CD8-positive, alpha-beta memory T cell (primary cell): ENCODE measurements at regions of chr9 and their contacts with region 1.

Region 1: GRCh38 chr9:129289131-129289731 is 111.2 kb upstream of the IER5L start:
- DNase-seq: no peak
- H3K4me3 ChIP-seq: no peak overlapping the region
- H3K4me3 Mint-ChIP-seq: no peak overlapping the region
- H3K27ac ChIP-seq: no peak overlapping the region
- H3K27ac Mint-ChIP-seq: peak overlapping the region in 2 of 8 donors; percentile 46 to 79
- H3K4me1 ChIP-seq: no peaks in the 10 kb centered on the region
- H3K4me1 Mint-ChIP-seq: no peaks in the 10 kb centered on the region
- H3K27me3 ChIP-seq: no peaks in the 10 kb centered on the region
- H3K27me3 Mint-ChIP-seq: peaks cover 0 to 4% of the 10 kb centered on the region in 2 donors

Region 2: DNA sequence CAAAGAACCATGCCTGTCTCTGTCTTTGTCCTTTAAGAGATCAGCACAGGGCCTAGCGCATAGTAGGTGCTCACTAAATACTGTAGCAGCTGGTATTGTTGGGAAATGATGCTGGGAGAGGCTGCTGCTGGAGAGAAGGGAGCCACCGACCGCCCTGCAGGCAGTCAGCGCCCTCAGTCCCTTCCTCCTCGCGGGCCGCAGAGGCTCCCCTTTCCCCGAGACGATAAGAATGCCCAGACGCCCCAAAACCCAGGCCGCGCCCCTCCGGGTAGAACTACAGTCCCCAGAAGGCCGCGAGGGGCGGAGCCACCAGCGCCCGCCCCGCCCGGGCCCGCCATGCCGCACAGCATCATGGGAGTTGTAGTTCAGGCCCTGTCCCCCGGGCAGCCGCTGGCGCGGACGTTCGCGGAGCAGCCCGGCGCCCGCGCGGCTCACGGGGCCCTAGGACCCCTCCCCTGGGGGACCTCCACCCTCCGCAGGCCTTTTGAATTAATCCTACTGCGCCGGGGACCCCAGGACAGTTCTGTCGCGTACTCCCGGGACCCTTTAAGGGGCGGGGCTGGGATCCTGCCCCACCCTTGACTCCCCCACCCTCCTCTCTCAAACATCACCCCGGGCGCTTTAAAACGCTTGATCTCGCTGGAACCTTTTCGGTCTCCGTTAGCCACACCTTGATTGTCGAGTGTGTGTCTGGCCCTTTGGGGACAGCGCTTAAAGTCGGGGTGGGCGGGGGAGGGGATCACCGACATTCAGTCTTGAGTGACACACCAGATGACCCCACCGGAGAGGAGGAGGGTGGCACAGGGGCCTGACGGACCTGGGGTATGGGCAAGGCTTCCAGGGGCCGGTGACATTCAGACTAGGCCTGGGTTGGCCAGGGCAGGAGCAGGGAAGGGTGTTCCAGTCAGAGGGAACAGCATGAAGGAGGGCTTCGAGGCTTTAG is 86.3 kb before region 1 on chr9:
- CTCF ChIA-PET with region 1: no interaction called
- POLR2A ChIA-PET with region 1: no interaction called
- DNase-seq: peak; percentile 85 to 91 (median 88)
- H3K4me3 ChIP-seq: peak overlapping the region; percentile 76
- H3K4me3 Mint-ChIP-seq: peak overlapping the region in 6 of 7 donors; percentile 68 to 94 (median 77)
- H3K27ac ChIP-seq: peak overlapping the region; percentile 70
- H3K27ac Mint-ChIP-seq: peak overlapping the region; percentile 39 to 96 (median 64)
- H3K4me1 ChIP-seq: peaks cover 25% of the 10 kb centered on the region
- H3K4me1 Mint-ChIP-seq: peaks cover 14 to 22% (median 16%) of the 10 kb centered on the region in 3 donors
- H3K27me3 ChIP-seq: no peaks in the 10 kb centered on the region
- H3K27me3 Mint-ChIP-seq: peaks cover 1 to 13% of the 10 kb centered on the region in 2 donors

Region 3: DNA sequence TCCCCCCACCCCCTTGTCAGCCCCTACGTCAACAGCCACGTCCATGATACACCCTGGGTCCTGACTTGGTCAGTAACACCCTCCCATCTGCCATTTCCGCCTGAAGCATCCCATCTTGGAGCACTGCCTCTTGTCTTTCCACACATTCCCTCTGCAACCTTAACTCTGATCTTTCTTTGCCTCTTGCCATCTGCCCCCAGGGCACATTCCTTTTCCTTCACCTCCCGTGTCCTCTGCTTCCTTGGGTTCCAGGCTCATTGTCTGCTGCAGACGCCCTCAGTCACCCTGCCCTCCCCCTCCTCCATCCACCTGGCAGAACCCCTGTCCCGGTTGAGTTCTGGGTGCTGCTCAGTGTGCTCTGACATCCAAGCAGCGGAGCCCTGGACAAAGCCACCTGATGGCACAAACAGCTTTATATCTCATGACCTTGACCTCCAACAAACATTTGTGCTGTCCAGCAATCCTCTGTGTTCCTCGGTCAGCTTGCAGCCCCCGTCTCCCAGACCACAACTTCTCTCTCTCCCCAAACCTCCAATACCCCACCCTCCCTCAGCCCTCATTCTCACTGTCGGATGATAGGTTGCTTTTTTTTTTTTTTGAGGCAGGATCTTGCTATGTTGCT is 13.5 kb before region 1 on chr9:
- CTCF ChIA-PET with region 1: no interaction called
- POLR2A ChIA-PET with region 1: interaction called, 15 read pairs
- DNase-seq: peak in 1 of 5 donors; percentile 23
- H3K4me3 ChIP-seq: no peak overlapping the region
- H3K4me3 Mint-ChIP-seq: no peak overlapping the region
- H3K27ac ChIP-seq: no peak overlapping the region
- H3K27ac Mint-ChIP-seq: peak overlapping the region in 1 of 8 donors; percentile 11
- H3K4me1 ChIP-seq: peaks cover 11% of the 10 kb centered on the region
- H3K4me1 Mint-ChIP-seq: peaks cover 14 to 20% (median 15%) of the 10 kb centered on the region in 3 donors
- H3K27me3 ChIP-seq: no peaks in the 10 kb centered on the region
- H3K27me3 Mint-ChIP-seq: peaks cover 4 to 6% of the 10 kb centered on the region in 2 donors

Region 4: DNA sequence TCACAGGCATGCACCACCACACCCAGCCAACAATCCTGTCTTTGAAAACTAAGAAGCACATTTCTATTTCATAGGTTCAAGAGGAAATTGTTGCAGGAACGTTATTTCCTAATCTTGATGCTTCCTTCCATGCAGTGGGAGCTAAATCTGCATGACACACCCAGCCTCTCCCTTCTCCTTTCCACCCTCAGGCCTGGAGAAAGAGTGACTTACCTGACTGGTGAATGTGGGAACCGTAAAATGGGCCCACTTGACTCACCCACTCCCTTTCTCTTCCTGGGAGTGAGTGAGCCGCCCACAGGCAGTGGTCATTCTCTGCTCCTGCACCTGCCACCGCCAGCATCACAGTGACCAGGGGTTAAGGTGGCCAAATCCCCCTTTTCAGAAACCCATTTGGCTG is 253.5 kb after region 1 on chr9:
- CTCF ChIA-PET with region 1: no interaction called
- POLR2A ChIA-PET with region 1: no interaction called
- DNase-seq: no peak
- H3K4me3 ChIP-seq: no peak overlapping the region
- H3K4me3 Mint-ChIP-seq: no peak overlapping the region
- H3K27ac ChIP-seq: no peak overlapping the region
- H3K27ac Mint-ChIP-seq: no peak overlapping the region
- H3K4me1 ChIP-seq: no peaks in the 10 kb centered on the region
- H3K4me1 Mint-ChIP-seq: no peaks in the 10 kb centered on the region
- H3K27me3 ChIP-seq: no peaks in the 10 kb centered on the region
- H3K27me3 Mint-ChIP-seq: peaks cover 8 to 19% of the 10 kb centered on the region in 2 donors